ENCODE measurements at regions of chr3 and their contacts with region 1.

Region 1: GRCh38 chr3:99499235-99500158 is 138.9 kb upstream of the COL8A1 start:
- DNase-seq: peak; percentile 9
- ATAC-seq: no peak
- H3K4me3 Mint-ChIP-seq: no peak overlapping the region
- H3K27ac Mint-ChIP-seq: no peak overlapping the region
- H3K4me1 Mint-ChIP-seq: no peaks in the 10 kb centered on the region
- H3K27me3 Mint-ChIP-seq: no peaks in the 10 kb centered on the region
- CTCF ChIP-seq: peak; percentile 14

Region 2: DNA sequence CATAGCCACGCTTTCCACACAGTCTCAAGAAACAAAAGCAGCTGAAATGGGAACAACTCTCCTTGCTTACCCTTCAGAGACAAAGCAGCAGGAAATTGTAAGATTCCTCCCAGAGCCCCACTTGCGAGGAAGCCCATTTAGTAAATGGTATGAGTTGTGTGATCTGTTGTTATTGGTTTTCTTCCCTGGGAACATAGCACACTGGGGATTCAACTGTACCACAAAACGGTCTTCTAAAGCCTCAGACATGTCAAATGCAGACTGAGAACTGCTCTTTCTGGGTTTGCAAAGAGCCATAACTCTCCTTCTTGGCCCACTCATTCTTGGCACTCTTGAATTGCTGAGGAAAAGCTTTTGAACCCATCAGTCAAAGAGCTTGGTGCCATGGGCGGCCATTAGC is 37.9 kb after region 1 on chr3:
- CTCF ChIA-PET with region 1: no interaction called
- POLR2A ChIA-PET with region 1: no interaction called
- intact Hi-C with region 1: no loop called
- DNase-seq: no peak
- ATAC-seq: no peak
- H3K4me3 Mint-ChIP-seq: no peak overlapping the region
- H3K27ac Mint-ChIP-seq: no peak overlapping the region
- H3K4me1 Mint-ChIP-seq: no peaks in the 10 kb centered on the region
- H3K27me3 Mint-ChIP-seq: no peaks in the 10 kb centered on the region
- CTCF ChIP-seq: no peak

Region 3: GRCh38 chr3:99753268-99753975 is 253.9 kb after region 1 on chr3:
- CTCF ChIA-PET with region 1: interaction called, 3 read pairs
- POLR2A ChIA-PET with region 1: no interaction called
- intact Hi-C with region 1: loop called (anchors 5 kb)
- DNase-seq: peak; percentile 26
- ATAC-seq: peak; percentile 88
- H3K4me3 Mint-ChIP-seq: no peak overlapping the region
- H3K27ac Mint-ChIP-seq: no peak overlapping the region
- H3K4me1 Mint-ChIP-seq: no peaks in the 10 kb centered on the region
- H3K27me3 Mint-ChIP-seq: peaks cover 14% of the 10 kb centered on the region
- CTCF ChIP-seq: peak; percentile 74